HepG2 (cell line): ENCODE measurements at regions of chr12 and their contacts with region 1.

Region 1: GRCh38 chr12:52391618-52392002 is 6.2 kb upstream of the KRT84 start:
- DNase-seq: no peak
- ATAC-seq: no peak
- H3K4me3 ChIP-seq: no peak overlapping the region
- H3K27ac ChIP-seq: no peak overlapping the region
- H3K4me1 ChIP-seq: no peaks in the 10 kb centered on the region
- H3K27me3 ChIP-seq: peaks cover 0 to 9% of the 10 kb centered on the region in 2 experiments; a peak in 3 of 5 replicates
- CTCF ChIP-seq: no peak
- EP300 ChIP-seq: no peak
- POLR2A ChIP-seq: no peak
- RAD21 ChIP-seq: no peak

Region 2: GRCh38 chr12:52415708-52416382 is 24.2 kb after region 1 on chr12:
- CTCF ChIA-PET with region 1: no interaction called
- POLR2A ChIA-PET with region 1: no interaction called
- in situ Hi-C with region 1: no loop called
- intact Hi-C with region 1: loop called (anchors 1 kb)
- DNase-seq: no peak
- ATAC-seq: no peak
- H3K4me3 ChIP-seq: no peak overlapping the region
- H3K27ac ChIP-seq: no peak overlapping the region
- H3K4me1 ChIP-seq: no peaks in the 10 kb centered on the region
- H3K27me3 ChIP-seq: no peaks in the 10 kb centered on the region; a peak in 1 of 5 replicates
- CTCF ChIP-seq: no peak
- EP300 ChIP-seq: no peak
- POLR2A ChIP-seq: no peak
- RAD21 ChIP-seq: no peak